ENCODE measurements at regions of chr4 and their contacts with region 1.

Region 1: GRCh38 chr4:76160355-76160754 is 12.2 kb upstream of the NUP54 start:
- DNase-seq: no peak
- ATAC-seq: no peak
- H3K4me3 ChIP-seq: no peak overlapping the region
- H3K27ac ChIP-seq: no peak overlapping the region
- H3K4me1 ChIP-seq: peaks cover 0 to 6% (median 0%) of the 10 kb centered on the region in 12 donors
- H3K27me3 ChIP-seq: no peaks in the 10 kb centered on the region
- CTCF ChIP-seq: no peak
- POLR2A ChIP-seq: no peak

Region 2: DNA sequence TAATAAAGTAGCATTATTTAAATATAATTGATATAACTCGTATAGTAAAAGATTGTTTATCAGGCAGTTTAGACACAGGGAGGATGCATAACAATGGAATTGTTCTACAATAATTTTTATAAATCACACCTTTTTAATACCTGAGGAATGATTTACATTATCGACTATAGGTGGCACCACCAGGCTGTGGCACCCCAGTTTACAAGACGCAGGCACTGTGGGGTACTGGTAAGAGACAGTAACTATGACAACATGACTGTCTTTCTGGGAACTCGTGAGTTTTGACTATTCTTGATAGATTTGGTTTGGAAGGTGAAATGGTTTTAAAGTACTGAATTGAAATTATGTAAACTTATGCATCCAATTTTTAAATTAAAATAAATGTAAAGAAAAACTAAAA is 119.1 kb after region 1 on chr4:
- intact Hi-C with region 1: loop called in 1 of 10 experiments (anchors 10 kb)
- DNase-seq: no peak
- ATAC-seq: no peak
- H3K4me3 ChIP-seq: no peak overlapping the region
- H3K27ac ChIP-seq: no peak overlapping the region
- H3K4me1 ChIP-seq: peaks cover 0 to 8% (median 0%) of the 10 kb centered on the region in 12 donors
- H3K27me3 ChIP-seq: no peaks in the 10 kb centered on the region
- CTCF ChIP-seq: peak in 1 of 12 donors; percentile 16
- POLR2A ChIP-seq: no peak

Region 3: DNA sequence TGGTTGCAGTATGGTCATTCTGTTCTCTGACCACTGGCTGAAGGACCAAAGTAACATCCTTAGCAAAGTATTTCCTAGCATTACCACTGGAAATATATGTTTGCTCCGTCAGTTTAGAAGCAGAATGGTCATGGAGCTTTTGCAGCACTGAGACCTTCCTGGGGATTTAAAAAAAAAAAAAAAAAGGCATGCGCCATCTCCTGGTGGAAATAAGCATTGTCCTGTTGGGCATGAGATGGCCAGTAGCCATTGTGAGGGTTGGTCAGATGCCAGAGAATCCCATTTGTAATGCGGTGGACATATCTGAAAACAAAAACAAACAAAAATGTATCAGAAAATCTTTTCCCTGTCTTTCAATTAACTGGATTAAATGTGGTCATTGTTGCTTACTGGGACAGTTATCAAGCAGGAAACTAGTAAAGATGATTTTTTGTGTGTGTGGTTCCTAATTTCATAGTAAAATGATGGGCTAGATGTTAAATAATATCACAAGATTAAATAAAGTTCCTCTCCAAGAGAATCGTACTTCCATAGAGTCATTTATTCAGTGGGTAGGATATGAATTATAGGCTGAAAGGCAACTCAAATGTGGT is 598.0 kb after region 1 on chr4:
- intact Hi-C with region 1: no loop called
- DNase-seq: no peak
- ATAC-seq: peak; percentile 36 to 66 (median 52)
- H3K4me3 ChIP-seq: no peak overlapping the region
- H3K27ac ChIP-seq: peak overlapping the region in 2 of 12 donors; percentile 2 to 5
- H3K4me1 ChIP-seq: peaks cover 0 to 29% (median 10%) of the 10 kb centered on the region in 12 donors
- H3K27me3 ChIP-seq: peaks cover 0 to 3% (median 0%) of the 10 kb centered on the region in 9 donors
- CTCF ChIP-seq: peak; percentile 66 to 87 (median 76)
- POLR2A ChIP-seq: no peak